CD8-positive, alpha-beta T cell (primary cell): ENCODE measurements at regions of chr9 and their contacts with region 1.

Region 1: DNA sequence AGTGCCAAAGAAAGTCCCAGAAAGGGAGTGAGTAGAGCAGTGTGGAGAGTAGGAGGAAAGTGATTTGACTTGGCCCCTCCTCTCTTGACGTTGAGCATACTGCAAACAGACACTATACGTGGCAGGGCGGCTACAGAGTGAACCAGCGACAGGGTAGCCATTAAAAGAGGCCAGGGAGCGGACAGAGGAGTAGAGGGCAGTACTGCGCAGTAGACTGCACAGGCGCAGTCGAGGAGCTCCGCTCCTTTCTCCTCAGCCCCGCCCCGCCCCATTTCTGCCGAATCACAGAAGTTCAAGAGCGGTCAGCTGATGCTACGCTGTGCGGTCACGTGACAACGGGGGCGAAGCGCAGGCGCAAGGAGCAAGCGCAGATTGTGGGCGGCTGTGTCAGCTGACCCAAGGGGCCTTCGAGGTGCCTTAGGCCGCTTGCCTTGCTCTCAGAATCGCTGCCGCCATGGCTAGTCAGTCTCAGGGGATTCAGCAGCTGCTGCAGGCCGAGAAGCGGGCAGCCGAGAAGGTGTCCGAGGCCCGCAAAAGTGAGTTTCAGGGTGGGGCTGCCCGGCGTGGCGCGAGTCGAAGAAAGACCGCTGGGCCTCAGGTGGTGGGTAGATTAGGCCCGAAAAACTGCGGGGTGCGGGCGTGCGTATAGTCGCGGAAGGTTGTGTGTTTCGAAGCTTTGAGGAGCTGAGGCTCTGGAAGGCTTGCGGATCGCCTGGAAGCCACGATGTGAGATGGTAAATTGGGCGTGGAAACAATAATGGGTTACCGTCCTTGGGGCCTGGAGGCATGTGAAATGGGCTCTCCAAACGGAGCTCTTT is at the start of gene ATP6V1G1:
- DNase-seq: peak; percentile 96 to 100 (median 99)
- ATAC-seq: peak; percentile 92
- H3K4me3 ChIP-seq: peak within 1 kb of the TSS; percentile 79 to 93
- H3K4me3 Mint-ChIP-seq: peak within 1 kb of the TSS; percentile 99
- H3K27ac ChIP-seq: peak within 1 kb of the TSS; percentile 88 to 94
- H3K27ac Mint-ChIP-seq: peak within 1 kb of the TSS; percentile 100
- H3K4me1 ChIP-seq: peaks cover 36% of the 10 kb centered on the region
- H3K4me1 Mint-ChIP-seq: peaks cover 47% of the 10 kb centered on the region
- H3K27me3 ChIP-seq: no peaks in the 10 kb centered on the region
- H3K27me3 Mint-ChIP-seq: no peaks in the 10 kb centered on the region
- CTCF ChIP-seq: no peak
- total RNA-seq, gene ATP6V1G1: 141 to 147 TPM

Region 2: GRCh38 chr9:114348906-114349482 is 238.6 kb before region 1 on chr9:
- CTCF ChIA-PET with region 1: no interaction called
- POLR2A ChIA-PET with region 1: no interaction called
- intact Hi-C with region 1: loop called in 1 of 2 experiments (anchors 10 kb)
- DNase-seq: peak in 7 of 9 experiments; percentile 48 to 88 (median 70)
- ATAC-seq: peak; percentile 87
- H3K4me3 ChIP-seq: no peak overlapping the region
- H3K4me3 Mint-ChIP-seq: peak overlapping the region; percentile 36
- H3K27ac ChIP-seq: peak overlapping the region; percentile 21 to 62
- H3K27ac Mint-ChIP-seq: peak overlapping the region; percentile 95
- H3K4me1 ChIP-seq: peaks cover 50% of the 10 kb centered on the region
- H3K4me1 Mint-ChIP-seq: peaks cover 63% of the 10 kb centered on the region
- H3K27me3 ChIP-seq: no peaks in the 10 kb centered on the region
- H3K27me3 Mint-ChIP-seq: no peaks in the 10 kb centered on the region
- CTCF ChIP-seq: no peak

Region 3: DNA sequence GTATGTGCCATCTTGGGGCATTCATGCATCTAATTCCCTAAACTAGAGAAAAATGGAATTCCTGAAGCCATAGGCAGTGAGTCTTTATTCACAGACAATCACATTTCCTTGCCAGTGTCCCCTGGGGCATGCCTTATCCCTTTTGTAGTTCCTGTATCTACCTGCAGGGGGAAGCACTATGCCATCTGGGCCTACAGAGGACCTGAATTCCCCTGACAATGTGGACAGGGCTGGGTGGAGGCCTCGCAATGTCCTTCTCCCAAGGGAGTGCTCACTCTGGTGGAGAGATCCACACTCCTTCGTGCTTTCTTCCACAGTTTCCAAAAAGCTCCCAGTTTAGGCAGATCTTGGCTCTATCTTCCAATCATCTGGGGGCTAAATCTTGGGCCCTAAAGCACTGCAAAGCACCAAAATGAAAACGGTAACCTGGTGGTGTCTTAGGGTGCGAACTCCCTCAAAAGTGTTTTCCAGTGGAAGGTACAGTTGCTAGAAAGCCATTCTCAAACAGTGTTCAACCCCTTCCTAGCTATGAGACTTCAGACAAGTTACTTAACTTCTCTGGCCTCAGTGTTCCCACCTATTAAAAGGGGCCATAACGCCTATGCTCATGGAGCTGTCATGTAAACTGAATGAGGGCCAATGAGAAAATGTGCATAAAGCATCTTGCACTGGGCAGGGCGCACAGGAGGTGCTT is 99.8 kb before region 1 on chr9:
- CTCF ChIA-PET with region 1: interaction called, 4 read pairs
- POLR2A ChIA-PET with region 1: no interaction called
- intact Hi-C with region 1: loop called in 1 of 2 experiments (anchors 1 kb)
- DNase-seq: peak; percentile 25 to 83 (median 64)
- ATAC-seq: peak; percentile 85
- H3K4me3 ChIP-seq: no peak overlapping the region
- H3K4me3 Mint-ChIP-seq: no peak overlapping the region
- H3K27ac ChIP-seq: no peak overlapping the region
- H3K27ac Mint-ChIP-seq: no peak overlapping the region
- H3K4me1 ChIP-seq: peaks cover 6% of the 10 kb centered on the region
- H3K4me1 Mint-ChIP-seq: peaks cover 11% of the 10 kb centered on the region
- H3K27me3 ChIP-seq: no peaks in the 10 kb centered on the region
- H3K27me3 Mint-ChIP-seq: no peaks in the 10 kb centered on the region
- CTCF ChIP-seq: peak; percentile 94

Region 4: DNA sequence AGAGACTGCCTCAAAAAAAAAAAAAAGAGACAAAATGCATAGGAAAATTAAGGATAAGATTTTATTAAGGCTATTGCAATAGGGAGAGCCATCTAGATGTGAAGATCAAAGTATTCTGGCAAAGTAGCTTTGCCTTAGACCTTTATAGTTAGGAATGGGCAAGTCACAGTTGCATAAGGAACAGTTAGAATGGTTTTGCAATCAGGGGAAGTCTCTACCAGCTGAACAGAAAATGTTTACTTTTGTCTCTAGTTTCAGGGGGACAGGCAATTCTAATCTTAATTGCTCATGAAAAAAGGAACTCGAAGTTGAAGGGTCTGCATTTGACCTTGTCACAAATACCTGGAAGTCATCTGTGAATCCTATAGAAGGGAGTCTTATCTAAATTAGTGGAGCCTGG is 13.2 kb before region 1 on chr9:
- CTCF ChIA-PET with region 1: interaction called, 11 read pairs
- POLR2A ChIA-PET with region 1: interaction called, 4 read pairs
- intact Hi-C with region 1: no loop called
- DNase-seq: no peak
- ATAC-seq: no peak
- H3K4me3 ChIP-seq: no peak overlapping the region
- H3K4me3 Mint-ChIP-seq: no peak overlapping the region
- H3K27ac ChIP-seq: no peak overlapping the region
- H3K27ac Mint-ChIP-seq: no peak overlapping the region
- H3K4me1 ChIP-seq: no peaks in the 10 kb centered on the region
- H3K4me1 Mint-ChIP-seq: no peaks in the 10 kb centered on the region
- H3K27me3 ChIP-seq: no peaks in the 10 kb centered on the region
- H3K27me3 Mint-ChIP-seq: no peaks in the 10 kb centered on the region
- CTCF ChIP-seq: no peak

Region 5: DNA sequence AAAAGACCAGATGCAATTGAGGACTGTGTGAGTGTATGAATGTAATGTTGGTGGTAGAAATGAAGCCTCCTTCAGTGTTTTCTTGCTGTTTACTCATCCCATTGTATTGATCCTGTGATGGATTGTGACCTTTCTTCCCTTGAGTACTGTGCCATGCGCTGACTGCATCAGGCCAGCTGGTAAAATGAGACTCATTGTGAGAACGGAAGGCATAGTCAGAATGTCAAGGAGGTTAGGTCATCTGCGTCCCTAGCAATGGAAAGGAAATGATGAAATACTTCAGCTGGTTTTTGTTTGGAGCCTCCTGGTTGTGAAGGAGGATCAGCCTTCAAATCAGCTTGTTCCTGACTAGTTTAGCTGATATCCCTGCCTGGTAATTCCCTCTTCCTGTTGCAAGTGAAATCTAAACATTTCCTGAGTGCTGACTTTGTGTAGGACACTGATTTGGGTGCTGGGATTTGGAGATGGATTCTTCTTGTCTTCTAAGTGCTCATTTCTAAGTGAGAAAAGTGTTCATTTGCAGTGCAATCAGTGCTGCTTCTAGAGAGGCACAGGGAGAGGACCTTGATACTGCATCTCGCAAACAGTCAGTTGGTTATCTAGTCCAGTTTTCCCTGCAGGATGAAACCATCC is 307.3 kb after region 1 on chr9:
- CTCF ChIA-PET with region 1: no interaction called
- POLR2A ChIA-PET with region 1: interaction called, 3 read pairs
- intact Hi-C with region 1: loop called in 1 of 2 experiments (anchors 10 kb)
- DNase-seq: no peak
- ATAC-seq: no peak
- H3K4me3 ChIP-seq: no peak overlapping the region
- H3K4me3 Mint-ChIP-seq: peak overlapping the region; percentile 26
- H3K27ac ChIP-seq: peak overlapping the region in 1 of 2 experiments; percentile 1
- H3K27ac Mint-ChIP-seq: peak overlapping the region; percentile 37
- H3K4me1 ChIP-seq: peaks cover 64% of the 10 kb centered on the region
- H3K4me1 Mint-ChIP-seq: peaks cover 49% of the 10 kb centered on the region
- H3K27me3 ChIP-seq: no peaks in the 10 kb centered on the region
- H3K27me3 Mint-ChIP-seq: no peaks in the 10 kb centered on the region
- CTCF ChIP-seq: no peak

Region 6: GRCh38 chr9:114938687-114939575 is 351.3 kb after region 1 on chr9:
- CTCF ChIA-PET with region 1: no interaction called
- POLR2A ChIA-PET with region 1: no interaction called
- intact Hi-C with region 1: no loop called
- DNase-seq: peak in 1 of 9 experiments; percentile 23
- ATAC-seq: no peak
- H3K4me3 ChIP-seq: peak overlapping the region in 1 of 2 experiments; percentile 3
- H3K4me3 Mint-ChIP-seq: peak overlapping the region; percentile 43
- H3K27ac ChIP-seq: peak overlapping the region in 1 of 2 experiments; percentile 15
- H3K27ac Mint-ChIP-seq: peak overlapping the region; percentile 73
- H3K4me1 ChIP-seq: peaks cover 24% of the 10 kb centered on the region
- H3K4me1 Mint-ChIP-seq: peaks cover 26% of the 10 kb centered on the region
- H3K27me3 ChIP-seq: no peaks in the 10 kb centered on the region
- H3K27me3 Mint-ChIP-seq: no peaks in the 10 kb centered on the region
- CTCF ChIP-seq: no peak